ENCODE measurements at regions of chr3 and their contacts with region 1.

Region 1: GRCh38 chr3:150763122-150763841 is at the start of gene SIAH2:
- DNase-seq: peak; percentile 86 to 97 (median 92)
- ATAC-seq: peak; percentile 82 to 86 (median 84)
- H3K4me3 ChIP-seq: peak within 1 kb of the TSS; percentile 90 to 95
- H3K4me3 Mint-ChIP-seq: peak within 1 kb of the TSS; percentile 92 to 97 (median 94)
- H3K27ac ChIP-seq: peak within 1 kb of the TSS; percentile 97
- H3K27ac Mint-ChIP-seq: peak within 1 kb of the TSS; percentile 99
- H3K4me1 ChIP-seq: peaks cover 20 to 31% of the 10 kb centered on the region in 2 experiments
- H3K4me1 Mint-ChIP-seq: peaks cover 46 to 51% (median 48%) of the 10 kb centered on the region in 3 donors
- H3K27me3 ChIP-seq: no peaks in the 10 kb centered on the region
- H3K27me3 Mint-ChIP-seq: no peaks in the 10 kb centered on the region
- total RNA-seq, gene SIAH2: 24.5 to 40.3 (median 26.4) TPM

Region 2: DNA sequence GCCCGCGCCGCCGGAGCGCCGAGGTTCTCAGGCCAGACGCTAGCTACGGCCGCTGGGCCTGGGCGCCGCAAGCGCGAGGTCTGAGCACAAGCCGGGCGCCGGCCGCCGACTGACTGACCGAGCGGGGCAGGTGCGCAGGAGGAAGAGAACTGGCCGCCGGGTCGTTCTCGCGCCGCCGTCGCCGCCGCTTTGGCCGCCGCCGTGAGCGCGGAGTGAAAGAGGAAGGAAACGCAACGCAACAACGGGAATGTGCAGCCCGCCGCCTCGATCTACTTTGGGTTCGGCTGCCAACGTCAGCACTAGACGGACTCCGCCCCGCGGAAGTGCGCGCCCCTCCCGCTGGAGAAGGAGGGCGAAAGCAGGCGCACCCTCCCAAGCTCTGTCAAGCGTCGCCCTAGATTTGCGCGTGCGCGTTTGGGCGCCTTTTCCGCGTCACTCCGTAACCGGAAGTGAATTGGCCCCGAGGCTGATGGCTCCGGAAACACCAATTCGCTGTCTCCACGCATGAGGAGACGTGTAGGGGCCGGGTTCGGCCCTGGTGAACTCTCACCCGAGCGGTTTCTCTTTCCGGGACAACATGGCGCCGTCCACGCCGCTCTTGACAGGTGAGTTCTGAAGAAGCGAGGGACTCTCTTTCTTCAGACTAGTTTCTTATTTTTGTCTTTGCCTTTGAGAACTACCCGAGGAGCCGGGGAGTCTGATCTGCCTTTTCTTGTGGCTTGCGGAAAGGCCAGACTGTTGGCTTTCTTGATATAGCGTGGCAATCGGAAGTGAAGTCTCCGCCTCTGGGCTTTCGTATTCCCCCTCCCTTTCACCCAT is 216.8 kb before region 1 on chr3 and contains the starts of genes EIF2A and SERP1:
- CTCF ChIA-PET with region 1: interaction called in 1 of 2 experiments, 4 read pairs
- POLR2A ChIA-PET with region 1: interaction called, 4 to 18 read pairs
- DNase-seq: peak; percentile 97 to 100 (median 99)
- ATAC-seq: peak; percentile 91 to 94 (median 92)
- H3K4me3 ChIP-seq: peak within 1 kb of the TSS; percentile 61 to 98
- H3K4me3 Mint-ChIP-seq: peak within 1 kb of the TSS; percentile 94 to 95 (median 94)
- H3K27ac ChIP-seq: peak within 1 kb of the TSS; percentile 89
- H3K27ac Mint-ChIP-seq: peak within 1 kb of the TSS; percentile 97 to 99
- H3K4me1 ChIP-seq: peaks cover 7 to 27% of the 10 kb centered on the region in 2 experiments
- H3K4me1 Mint-ChIP-seq: peaks cover 68 to 74% (median 70%) of the 10 kb centered on the region in 3 donors
- H3K27me3 ChIP-seq: no peaks in the 10 kb centered on the region
- H3K27me3 Mint-ChIP-seq: no peaks in the 10 kb centered on the region
- total RNA-seq, gene EIF2A: 81.5 to 126 (median 100) TPM
- total RNA-seq, gene SERP1: 109 to 134 (median 123) TPM

Region 3: GRCh38 chr3:150603153-150603979 is 159.9 kb before region 1 on chr3 and contains the start of gene SELENOT:
- CTCF ChIA-PET with region 1: interaction called in 1 of 2 experiments, 7 read pairs
- POLR2A ChIA-PET with region 1: interaction called, 3 to 11 read pairs
- DNase-seq: peak; percentile 84 to 98 (median 91)
- ATAC-seq: peak; percentile 83 to 88 (median 85)
- H3K4me3 ChIP-seq: peak within 1 kb of the TSS; percentile 95 to 97
- H3K4me3 Mint-ChIP-seq: peak within 1 kb of the TSS; percentile 98 to 99 (median 99)
- H3K27ac ChIP-seq: peak within 1 kb of the TSS; percentile 98
- H3K27ac Mint-ChIP-seq: peak within 1 kb of the TSS; percentile 98 to 99
- H3K4me1 ChIP-seq: peaks cover 28 to 32% of the 10 kb centered on the region in 2 experiments
- H3K4me1 Mint-ChIP-seq: peaks cover 64 to 75% (median 72%) of the 10 kb centered on the region in 3 donors
- H3K27me3 ChIP-seq: no peaks in the 10 kb centered on the region
- H3K27me3 Mint-ChIP-seq: no peaks in the 10 kb centered on the region
- total RNA-seq, gene SELENOT: 64.1 to 85.9 (median 70.3) TPM

Region 4: DNA sequence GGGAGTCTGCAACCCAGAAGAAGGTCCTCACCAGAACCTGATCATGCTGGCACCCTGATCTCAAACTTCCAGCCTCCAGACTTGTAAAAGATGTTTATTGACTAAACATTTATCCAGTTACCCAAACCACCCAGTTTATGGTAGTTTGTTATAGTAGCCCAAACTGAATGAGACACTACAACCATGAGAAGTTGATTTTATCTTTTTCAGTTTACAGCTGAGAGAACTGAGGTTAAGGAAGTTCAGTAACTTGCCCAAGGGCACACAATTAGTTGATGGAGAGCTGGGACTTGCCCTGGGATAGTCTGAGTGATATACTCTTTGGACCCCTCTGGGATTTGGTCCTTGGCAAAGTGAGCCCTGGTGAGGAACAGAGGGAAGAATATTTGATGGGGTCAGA is 113.0 kb before region 1 on chr3:
- CTCF ChIA-PET with region 1: no interaction called
- POLR2A ChIA-PET with region 1: no interaction called
- DNase-seq: no peak
- ATAC-seq: no peak
- H3K4me3 ChIP-seq: no peak overlapping the region
- H3K4me3 Mint-ChIP-seq: no peak overlapping the region
- H3K27ac ChIP-seq: no peak overlapping the region
- H3K27ac Mint-ChIP-seq: no peak overlapping the region
- H3K4me1 ChIP-seq: no peaks in the 10 kb centered on the region
- H3K4me1 Mint-ChIP-seq: no peaks in the 10 kb centered on the region
- H3K27me3 ChIP-seq: no peaks in the 10 kb centered on the region
- H3K27me3 Mint-ChIP-seq: no peaks in the 10 kb centered on the region

Region 5: GRCh38 chr3:150666167-150666566 is 97.1 kb before region 1 on chr3:
- CTCF ChIA-PET with region 1: no interaction called
- POLR2A ChIA-PET with region 1: no interaction called
- DNase-seq: peak in 1 of 35 experiments; percentile 12
- ATAC-seq: peak in 2 of 4 experiments; percentile 45 to 60
- H3K4me3 ChIP-seq: no peak overlapping the region
- H3K4me3 Mint-ChIP-seq: no peak overlapping the region
- H3K27ac ChIP-seq: no peak overlapping the region
- H3K27ac Mint-ChIP-seq: no peak overlapping the region
- H3K4me1 ChIP-seq: peaks cover 0 to 5% of the 10 kb centered on the region in 2 experiments
- H3K4me1 Mint-ChIP-seq: peaks cover 5 to 15% (median 14%) of the 10 kb centered on the region in 3 donors
- H3K27me3 ChIP-seq: peaks cover 0 to 3% of the 10 kb centered on the region in 2 experiments
- H3K27me3 Mint-ChIP-seq: peaks cover 11 to 14% of the 10 kb centered on the region in 2 donors

Region 6: GRCh38 chr3:150703299-150704134 is 59.8 kb before region 1 on chr3 and contains the start of gene ERICH6:
- CTCF ChIA-PET with region 1: interaction called in 1 of 2 experiments, 16 read pairs
- POLR2A ChIA-PET with region 1: interaction called in 1 of 2 experiments, 27 read pairs
- DNase-seq: peak; percentile 44 to 84 (median 69)
- ATAC-seq: peak; percentile 84 to 89 (median 84)
- H3K4me3 ChIP-seq: peak within 1 kb of the TSS; percentile 87 to 89
- H3K4me3 Mint-ChIP-seq: peak within 1 kb of the TSS; percentile 93 to 98 (median 96)
- H3K27ac ChIP-seq: peak within 1 kb of the TSS; percentile 94
- H3K27ac Mint-ChIP-seq: peak within 1 kb of the TSS; percentile 96 to 97
- H3K4me1 ChIP-seq: peaks cover 9 to 23% of the 10 kb centered on the region in 2 experiments
- H3K4me1 Mint-ChIP-seq: peaks cover 17 to 28% (median 21%) of the 10 kb centered on the region in 3 donors
- H3K27me3 ChIP-seq: no peaks in the 10 kb centered on the region
- H3K27me3 Mint-ChIP-seq: no peaks in the 10 kb centered on the region
- total RNA-seq, gene ERICH6: 0.26 to 0.39 (median 0.28) TPM in 3 of 5 donors, not detected in the others

Region 7: DNA sequence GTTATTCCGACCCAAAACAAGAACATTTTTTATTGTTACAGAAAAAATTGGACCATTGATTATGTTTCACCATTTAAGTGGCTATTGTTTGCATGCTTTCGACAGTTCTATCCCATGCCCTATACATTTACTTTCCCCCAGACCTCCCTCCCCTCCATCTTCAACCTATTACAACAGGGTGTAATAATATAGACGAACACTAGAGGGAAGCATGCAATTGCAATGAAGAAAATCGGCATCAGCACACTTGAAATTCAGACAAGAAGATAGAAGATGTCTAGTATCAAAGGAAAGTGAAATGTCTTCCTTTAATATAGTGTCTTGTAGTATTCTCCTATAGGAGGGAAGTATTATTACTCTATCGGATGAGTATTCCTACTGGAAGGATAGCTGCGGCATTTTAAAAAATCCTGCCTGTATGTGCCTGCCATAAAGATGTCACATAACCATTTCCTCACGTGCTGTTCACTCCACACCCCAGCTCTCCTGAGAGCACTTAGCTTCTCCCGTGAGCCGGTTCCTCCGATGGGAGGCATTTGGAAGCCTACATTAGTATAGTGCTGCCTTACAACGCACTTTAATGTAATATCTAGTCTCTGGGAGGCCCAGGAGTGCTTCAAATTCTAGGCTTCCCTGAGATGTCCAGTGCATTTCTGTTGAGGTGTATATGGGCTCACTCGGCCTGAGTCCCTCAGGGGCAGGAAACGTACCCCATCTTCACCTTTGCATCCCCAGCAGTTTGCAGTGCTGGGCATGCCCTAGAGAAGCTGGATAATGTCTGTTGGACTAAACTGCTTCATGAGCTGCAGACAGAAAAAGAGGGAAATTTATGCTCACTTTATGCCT is 41.8 kb before region 1 on chr3:
- CTCF ChIA-PET with region 1: interaction called, 11 to 15 read pairs
- POLR2A ChIA-PET with region 1: interaction called, 3 to 4 read pairs
- DNase-seq: peak in 3 of 35 experiments; percentile 23 to 82 (median 27)
- ATAC-seq: peak; percentile 73 to 82 (median 77)
- H3K4me3 ChIP-seq: no peak overlapping the region
- H3K4me3 Mint-ChIP-seq: no peak overlapping the region
- H3K27ac ChIP-seq: no peak overlapping the region
- H3K27ac Mint-ChIP-seq: no peak overlapping the region
- H3K4me1 ChIP-seq: peaks cover 0 to 5% of the 10 kb centered on the region in 2 experiments
- H3K4me1 Mint-ChIP-seq: peaks cover 12 to 18% (median 13%) of the 10 kb centered on the region in 3 donors
- H3K27me3 ChIP-seq: no peaks in the 10 kb centered on the region
- H3K27me3 Mint-ChIP-seq: no peaks in the 10 kb centered on the region

Region 8: DNA sequence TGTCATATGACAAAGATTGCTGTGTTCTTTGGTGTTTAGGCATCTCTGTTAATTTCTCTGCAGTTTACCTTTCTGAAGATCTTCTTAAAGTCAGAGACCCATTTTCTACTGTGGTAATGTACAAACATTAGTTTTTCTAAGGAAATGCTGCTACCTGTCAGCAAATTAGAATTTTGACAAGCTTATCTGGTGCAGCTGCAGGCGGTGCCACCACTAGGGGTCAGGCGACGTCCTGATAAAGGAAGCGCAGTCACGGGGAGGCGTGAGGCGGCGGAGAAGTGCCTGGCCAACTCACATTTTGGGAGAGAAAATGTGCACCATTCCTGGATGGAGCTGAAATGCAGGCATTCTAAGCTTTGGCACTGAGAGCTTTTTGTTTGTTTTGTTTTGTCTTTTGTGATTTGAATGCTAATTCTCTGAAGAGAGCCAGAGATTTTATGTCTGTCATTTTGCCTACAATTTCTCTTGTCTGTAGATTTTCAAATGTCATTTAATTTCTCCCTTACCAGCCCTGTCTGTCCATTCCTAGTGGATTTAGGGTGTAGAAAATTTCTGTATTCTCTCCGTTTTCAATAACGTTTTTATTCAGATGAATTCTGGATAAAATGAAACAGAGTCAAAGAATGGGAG is 24.6 kb after region 1 on chr3:
- CTCF ChIA-PET with region 1: interaction called, 6 to 20 read pairs
- POLR2A ChIA-PET with region 1: interaction called in 1 of 2 experiments, 5 read pairs
- DNase-seq: peak; percentile 49 to 83 (median 72)
- ATAC-seq: peak; percentile 85 to 93 (median 89)
- H3K4me3 ChIP-seq: no peak overlapping the region
- H3K4me3 Mint-ChIP-seq: no peak overlapping the region
- H3K27ac ChIP-seq: no peak overlapping the region
- H3K27ac Mint-ChIP-seq: no peak overlapping the region
- H3K4me1 ChIP-seq: no peaks in the 10 kb centered on the region
- H3K4me1 Mint-ChIP-seq: peaks cover 2 to 8% (median 4%) of the 10 kb centered on the region in 3 donors
- H3K27me3 ChIP-seq: peaks cover 0 to 3% of the 10 kb centered on the region in 2 experiments
- H3K27me3 Mint-ChIP-seq: peaks cover 4 to 10% of the 10 kb centered on the region in 2 donors

Region 9: GRCh38 chr3:150798122-150798626 is 34.9 kb after region 1 on chr3:
- CTCF ChIA-PET with region 1: no interaction called
- POLR2A ChIA-PET with region 1: no interaction called
- DNase-seq: no peak
- ATAC-seq: no peak
- H3K4me3 ChIP-seq: no peak overlapping the region
- H3K4me3 Mint-ChIP-seq: no peak overlapping the region
- H3K27ac ChIP-seq: no peak overlapping the region
- H3K27ac Mint-ChIP-seq: no peak overlapping the region
- H3K4me1 ChIP-seq: peaks cover 2 to 3% of the 10 kb centered on the region in 2 experiments
- H3K4me1 Mint-ChIP-seq: peaks cover 0 to 4% (median 3%) of the 10 kb centered on the region in 3 donors
- H3K27me3 ChIP-seq: peaks cover 0 to 4% of the 10 kb centered on the region in 2 experiments
- H3K27me3 Mint-ChIP-seq: peaks cover 10 to 11% of the 10 kb centered on the region in 2 donors